ENCODE measurements at regions of chr1 and their contacts with region 1.

Region 1: DNA sequence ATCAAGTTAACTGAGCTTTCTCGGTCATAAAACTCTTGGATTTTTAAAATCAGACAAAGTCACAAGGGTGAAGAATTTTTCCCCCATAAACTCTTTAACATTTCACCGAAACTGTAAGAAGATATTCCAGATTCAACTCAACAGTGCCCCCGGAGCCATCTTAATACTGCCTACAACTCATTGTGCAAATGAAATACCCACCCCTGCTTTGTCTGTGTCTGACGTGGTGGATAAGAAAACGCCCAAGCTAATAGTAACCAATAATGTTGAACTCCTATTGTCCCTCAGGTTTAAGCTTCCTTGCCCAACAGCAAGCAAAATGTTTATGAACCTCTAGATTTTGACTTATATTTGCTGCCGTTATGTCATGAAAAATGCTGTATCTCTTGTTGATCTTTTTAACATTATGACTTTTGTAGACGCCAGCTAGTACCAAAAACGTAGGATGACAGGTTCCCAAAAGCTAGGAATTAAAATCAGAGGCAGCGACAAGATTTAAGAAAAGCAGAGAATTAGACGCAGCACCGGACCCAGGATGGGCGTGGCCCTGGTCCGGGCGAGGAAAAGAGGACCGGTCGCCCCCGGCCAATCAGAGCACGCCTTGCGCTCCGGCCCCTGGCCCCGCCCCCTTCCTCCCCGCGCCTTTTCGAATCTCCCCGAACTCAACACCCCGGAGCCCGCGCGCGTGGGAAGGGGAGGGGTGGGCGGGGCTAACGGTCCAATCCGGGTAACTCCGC is 1.1 kb downstream of the STMN1 start:
- DNase-seq: peak; percentile 88
- ATAC-seq: peak; percentile 92
- H3K4me3 ChIP-seq: peak overlapping the region; percentile 71
- H3K27ac ChIP-seq: peak overlapping the region; percentile 36
- H3K4me1 ChIP-seq: peaks cover 5% of the 10 kb centered on the region
- H3K27me3 ChIP-seq: no peaks in the 10 kb centered on the region
- CTCF ChIP-seq: no peak
- POLR2A ChIP-seq: no peak
- RAD21 ChIP-seq: 0 out of 2 replicates have a peak, but pooled peaks have one; percentile 6

Region 2: DNA sequence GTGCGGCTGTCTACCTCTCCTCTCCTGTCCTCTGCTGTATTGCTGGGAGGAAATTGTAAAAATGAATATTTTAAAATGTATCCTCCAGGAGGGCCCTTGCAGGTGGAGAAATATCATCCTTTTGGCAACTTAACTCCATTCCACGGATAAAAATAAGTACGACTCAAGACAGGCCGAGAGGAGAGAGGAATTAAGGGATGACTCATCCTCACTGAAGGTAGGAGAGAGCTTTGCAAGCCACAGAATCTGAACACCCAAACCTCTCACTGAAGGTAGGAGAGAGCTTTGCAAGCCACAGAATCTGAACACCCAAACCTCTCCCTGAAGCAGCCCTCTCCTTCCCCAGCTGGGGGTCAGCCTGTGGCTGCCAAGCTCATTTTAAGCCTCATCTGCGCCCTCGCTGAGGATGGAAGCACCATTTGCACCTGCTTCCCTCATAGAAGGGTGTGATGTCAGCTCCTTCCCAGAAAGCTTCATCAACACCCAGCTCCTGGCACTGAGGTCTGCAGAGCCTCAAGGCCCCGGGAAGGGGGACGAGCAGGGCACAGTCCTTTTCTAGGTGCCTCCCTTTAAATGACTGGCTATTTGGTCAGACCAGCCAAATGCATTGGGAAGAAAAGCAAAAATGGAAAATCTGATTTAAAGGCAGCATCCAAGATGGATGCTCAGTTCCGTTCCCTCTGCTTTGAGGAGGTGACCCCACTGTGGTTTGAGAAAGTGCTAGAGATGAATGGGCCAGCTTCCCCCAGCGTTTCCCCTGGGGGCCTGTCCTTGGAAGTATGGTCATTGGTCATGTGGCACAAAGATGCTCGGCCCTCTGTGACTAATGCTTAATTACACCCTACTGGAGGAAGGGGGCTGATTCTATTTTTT is 118.0 kb before region 1 on chr1:
- CTCF ChIA-PET with region 1: no interaction called
- POLR2A ChIA-PET with region 1: no interaction called
- dilution Hi-C with region 1: no loop called
- in situ Hi-C with region 1: no loop called
- intact Hi-C with region 1: no loop called
- DNase-seq: peak; percentile 50
- ATAC-seq: peak; percentile 53
- H3K4me3 ChIP-seq: no peak overlapping the region
- H3K27ac ChIP-seq: no peak overlapping the region
- H3K4me1 ChIP-seq: peaks cover 12% of the 10 kb centered on the region
- H3K27me3 ChIP-seq: no peaks in the 10 kb centered on the region
- CTCF ChIP-seq: no peak
- POLR2A ChIP-seq: no peak
- RAD21 ChIP-seq: no peak

Region 3: GRCh38 chr1:25997828-25998761 is 93.0 kb after region 1 on chr1 and contains the start of gene PAFAH2:
- CTCF ChIA-PET with region 1: interaction called, 7 read pairs
- POLR2A ChIA-PET with region 1: no interaction called
- dilution Hi-C with region 1: no loop called
- in situ Hi-C with region 1: no loop called
- intact Hi-C with region 1: loop called (anchors 1 kb)
- DNase-seq: peak; percentile 100
- ATAC-seq: peak; percentile 99
- H3K4me3 ChIP-seq: peak within 1 kb of the TSS; percentile 48
- H3K27ac ChIP-seq: peak within 1 kb of the TSS; percentile 55
- H3K4me1 ChIP-seq: peaks cover 4% of the 10 kb centered on the region
- H3K27me3 ChIP-seq: no peaks in the 10 kb centered on the region
- CTCF ChIP-seq: peak; percentile 99
- POLR2A ChIP-seq: no peak; the same call in none of the 2 replicates
- RAD21 ChIP-seq: peak; percentile 99
- total RNA-seq, gene PAFAH2: 11.9 and 12.2 TPM in 2 replicates

Measured in IMR-90 (cell line).